ENCODE measurements at regions of chr12 and their contacts with region 1.

Region 1: GRCh38 chr12:14239350-14239934 is 126.0 kb upstream of the ATF7IP start:
- DNase-seq: peak in 2 of 9 donors; percentile 12 to 40
- ATAC-seq: peak; percentile 69
- H3K4me3 ChIP-seq: peak overlapping the region; percentile 52
- H3K4me3 Mint-ChIP-seq: peak overlapping the region; percentile 75 to 90 (median 82)
- H3K27ac ChIP-seq: peak overlapping the region; percentile 1
- H3K27ac Mint-ChIP-seq: peak overlapping the region; percentile 37 to 93 (median 87)
- H3K4me1 ChIP-seq: peaks cover 0 to 6% of the 10 kb centered on the region in 2 donors
- H3K4me1 Mint-ChIP-seq: peaks cover 17 to 29% (median 22%) of the 10 kb centered on the region in 7 donors
- H3K27me3 ChIP-seq: no peaks in the 10 kb centered on the region
- H3K27me3 Mint-ChIP-seq: no peaks in the 10 kb centered on the region

Region 2: GRCh38 chr12:14284184-14284722 is 44.8 kb after region 1 on chr12:
- CTCF ChIA-PET with region 1: no interaction called
- POLR2A ChIA-PET with region 1: no interaction called
- intact Hi-C with region 1: no loop called
- DNase-seq: no peak
- ATAC-seq: no peak
- H3K4me3 ChIP-seq: no peak overlapping the region
- H3K4me3 Mint-ChIP-seq: no peak overlapping the region
- H3K27ac ChIP-seq: no peak overlapping the region
- H3K27ac Mint-ChIP-seq: no peak overlapping the region
- H3K4me1 ChIP-seq: no peaks in the 10 kb centered on the region
- H3K4me1 Mint-ChIP-seq: peaks cover 0 to 8% (median 0%) of the 10 kb centered on the region in 7 donors
- H3K27me3 ChIP-seq: no peaks in the 10 kb centered on the region
- H3K27me3 Mint-ChIP-seq: no peaks in the 10 kb centered on the region

Region 3: GRCh38 chr12:14454098-14454907 is 214.9 kb after region 1 on chr12:
- CTCF ChIA-PET with region 1: interaction called, 5 read pairs
- POLR2A ChIA-PET with region 1: no interaction called
- intact Hi-C with region 1: loop called (anchors 1 kb)
- DNase-seq: peak in 7 of 9 donors; percentile 5 to 33 (median 25)
- ATAC-seq: peak; percentile 86
- H3K4me3 ChIP-seq: no peak overlapping the region
- H3K4me3 Mint-ChIP-seq: peak overlapping the region in 5 of 10 donors; percentile 1 to 32 (median 3)
- H3K27ac ChIP-seq: no peak overlapping the region
- H3K27ac Mint-ChIP-seq: peak overlapping the region; percentile 9 to 83 (median 73)
- H3K4me1 ChIP-seq: peaks cover 17 to 18% of the 10 kb centered on the region in 2 donors
- H3K4me1 Mint-ChIP-seq: peaks cover 36 to 68% (median 65%) of the 10 kb centered on the region in 7 donors
- H3K27me3 ChIP-seq: no peaks in the 10 kb centered on the region
- H3K27me3 Mint-ChIP-seq: no peaks in the 10 kb centered on the region

Region 4: DNA sequence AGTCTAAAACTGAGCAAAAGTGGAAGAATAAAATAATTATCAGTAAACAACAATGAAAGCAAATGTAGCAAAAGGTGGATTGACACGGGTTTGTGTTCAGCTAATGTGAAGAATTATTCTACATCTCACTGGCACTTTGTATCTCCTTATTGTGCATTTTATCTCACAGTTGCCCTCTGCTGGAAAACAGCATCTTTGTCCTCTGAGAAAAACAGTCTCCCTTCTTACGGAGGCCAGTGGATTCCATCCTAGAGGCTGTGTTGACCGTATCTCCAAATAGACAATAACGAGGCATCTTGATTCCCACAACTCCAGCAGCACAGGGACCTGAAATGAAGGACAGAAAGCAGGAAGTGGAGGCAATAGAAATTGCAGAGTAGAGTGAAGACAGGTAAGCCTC is 379.5 kb after region 1 on chr12:
- CTCF ChIA-PET with region 1: interaction called, 18 read pairs
- POLR2A ChIA-PET with region 1: no interaction called
- intact Hi-C with region 1: loop called (anchors 1 kb)
- DNase-seq: peak in 3 of 9 donors; percentile 3 to 19 (median 10)
- ATAC-seq: no peak
- H3K4me3 ChIP-seq: no peak overlapping the region
- H3K4me3 Mint-ChIP-seq: peak overlapping the region in 1 of 10 donors; percentile 19
- H3K27ac ChIP-seq: no peak overlapping the region
- H3K27ac Mint-ChIP-seq: no peak overlapping the region
- H3K4me1 ChIP-seq: no peaks in the 10 kb centered on the region
- H3K4me1 Mint-ChIP-seq: peaks cover 0 to 4% (median 0%) of the 10 kb centered on the region in 7 donors
- H3K27me3 ChIP-seq: no peaks in the 10 kb centered on the region
- H3K27me3 Mint-ChIP-seq: peaks cover 2 to 22% (median 21%) of the 10 kb centered on the region in 5 donors

Region 5: GRCh38 chr12:14664510-14664909 is 425.1 kb after region 1 on chr12:
- CTCF ChIA-PET with region 1: interaction called, 7 read pairs
- POLR2A ChIA-PET with region 1: no interaction called
- intact Hi-C with region 1: loop called (anchors 1 kb)
- DNase-seq: peak in 7 of 9 donors; percentile 29 to 64 (median 48)
- ATAC-seq: peak; percentile 83
- H3K4me3 ChIP-seq: no peak overlapping the region
- H3K4me3 Mint-ChIP-seq: no peak overlapping the region
- H3K27ac ChIP-seq: no peak overlapping the region
- H3K27ac Mint-ChIP-seq: no peak overlapping the region
- H3K4me1 ChIP-seq: no peaks in the 10 kb centered on the region
- H3K4me1 Mint-ChIP-seq: peaks cover 0 to 9% (median 8%) of the 10 kb centered on the region in 7 donors
- H3K27me3 ChIP-seq: peaks cover 0 to 4% of the 10 kb centered on the region in 2 donors
- H3K27me3 Mint-ChIP-seq: peaks cover 0 to 14% (median 5%) of the 10 kb centered on the region in 5 donors

Region 6: DNA sequence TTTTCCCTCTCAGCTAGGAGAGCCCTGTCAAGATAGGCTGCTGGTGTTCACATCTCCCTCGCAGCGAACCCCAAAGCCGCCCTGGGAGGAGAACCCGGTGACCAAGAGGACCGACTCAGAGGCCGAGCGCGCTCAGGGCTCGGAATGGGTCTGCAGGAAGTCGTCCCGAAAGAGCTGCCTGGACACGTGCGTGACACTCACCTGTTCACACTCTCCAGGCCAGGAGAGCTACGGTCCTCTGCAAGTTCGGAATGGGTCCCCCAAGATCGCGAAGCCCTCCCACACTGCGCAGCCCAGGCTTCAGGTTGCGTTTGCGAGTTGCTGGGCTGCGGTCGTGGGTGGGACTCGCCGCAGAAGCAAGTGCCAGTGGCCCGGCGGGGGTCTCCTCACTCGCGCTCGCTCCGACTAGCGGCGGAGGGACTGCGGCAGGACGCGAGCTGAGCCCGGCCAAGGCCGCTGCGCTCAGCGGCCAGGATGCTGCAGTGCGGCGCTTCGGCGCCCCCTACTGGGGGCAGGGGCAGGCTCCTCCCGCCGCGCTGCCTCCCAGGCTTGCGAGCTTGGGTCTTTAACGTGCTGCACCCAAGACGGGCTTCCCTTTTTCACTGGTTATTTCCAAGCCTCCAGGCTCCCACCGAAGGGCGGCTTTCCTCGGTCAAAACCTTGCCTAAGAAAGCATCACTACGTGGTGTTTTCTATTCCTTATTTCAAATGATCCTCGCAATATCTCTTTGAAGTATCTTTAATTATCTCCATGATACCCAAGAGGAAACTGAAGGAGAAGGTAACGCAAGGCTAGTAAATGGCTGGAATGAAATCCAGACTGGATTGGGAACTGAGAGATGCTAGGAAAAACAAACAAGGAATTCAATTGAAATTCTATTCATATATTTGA is 981.8 kb after region 1 on chr12 and contains the start of gene RERG:
- CTCF ChIA-PET with region 1: no interaction called
- POLR2A ChIA-PET with region 1: no interaction called
- intact Hi-C with region 1: loop called in 1 of 2 experiments (anchors 10 kb)
- DNase-seq: peak; percentile 57 to 86 (median 77)
- ATAC-seq: peak; percentile 99
- H3K4me3 ChIP-seq: peak within 1 kb of the TSS; percentile 43
- H3K4me3 Mint-ChIP-seq: peak within 1 kb of the TSS; percentile 61 to 83 (median 78)
- H3K27ac ChIP-seq: no peak within 1 kb of the TSS
- H3K27ac Mint-ChIP-seq: no peak within 1 kb of the TSS
- H3K4me1 ChIP-seq: peaks cover 6% of the 10 kb centered on the region in 2 donors
- H3K4me1 Mint-ChIP-seq: peaks cover 0 to 17% (median 9%) of the 10 kb centered on the region in 7 donors
- H3K27me3 ChIP-seq: no peaks in the 10 kb centered on the region
- H3K27me3 Mint-ChIP-seq: peaks cover 25 to 43% (median 32%) of the 10 kb centered on the region in 5 donors
- total RNA-seq, gene RERG: 0.35 TPM in 1 of 5 experiments, not detected in the others

Measured in naive thymus-derived CD4-positive, alpha-beta T cell (primary cell).